ENCODE measurements at regions of chr6 and their contacts with region 1.

Region 1: DNA sequence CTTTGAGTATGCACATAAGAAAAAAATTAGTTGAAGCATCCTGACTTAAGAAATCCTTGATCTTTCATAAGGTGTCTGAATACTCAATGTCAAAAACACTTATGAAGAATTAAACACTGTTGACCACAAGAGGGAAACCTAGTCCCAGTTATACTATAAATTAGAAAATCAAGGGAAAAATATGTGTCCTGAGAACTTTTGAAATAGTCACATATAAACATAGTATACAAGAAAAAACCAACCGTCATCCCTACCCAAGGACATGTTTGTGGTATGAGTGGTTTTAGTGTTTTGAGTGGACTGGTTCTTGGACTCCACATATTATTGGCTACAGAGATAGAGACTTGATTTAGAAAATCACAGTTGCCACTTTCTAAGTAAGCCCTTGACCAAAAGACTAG is 7.6 kb upstream of the HLA-DRA start:
- DNase-seq: no peak
- H3K4me3 ChIP-seq: no peak overlapping the region
- H3K27ac ChIP-seq: no peak overlapping the region
- H3K4me1 ChIP-seq: no peaks in the 10 kb centered on the region
- H3K27me3 ChIP-seq: peaks cover 8% of the 10 kb centered on the region; the same call in 1 of the 2 replicates
- CTCF ChIP-seq: peak; percentile 69

Region 2: GRCh38 chr6:32692019-32692418 is 260.0 kb after region 1 on chr6:
- CTCF ChIA-PET with region 1: interaction called, 4 read pairs
- POLR2A ChIA-PET with region 1: no interaction called
- intact Hi-C with region 1: loop called (anchors 2 kb)
- DNase-seq: peak in 1 of 2 experiments; percentile 18
- H3K4me3 ChIP-seq: no peak overlapping the region
- H3K27ac ChIP-seq: no peak overlapping the region
- H3K4me1 ChIP-seq: no peaks in the 10 kb centered on the region
- H3K27me3 ChIP-seq: no peaks in the 10 kb centered on the region
- CTCF ChIP-seq: no peak

Region 3: DNA sequence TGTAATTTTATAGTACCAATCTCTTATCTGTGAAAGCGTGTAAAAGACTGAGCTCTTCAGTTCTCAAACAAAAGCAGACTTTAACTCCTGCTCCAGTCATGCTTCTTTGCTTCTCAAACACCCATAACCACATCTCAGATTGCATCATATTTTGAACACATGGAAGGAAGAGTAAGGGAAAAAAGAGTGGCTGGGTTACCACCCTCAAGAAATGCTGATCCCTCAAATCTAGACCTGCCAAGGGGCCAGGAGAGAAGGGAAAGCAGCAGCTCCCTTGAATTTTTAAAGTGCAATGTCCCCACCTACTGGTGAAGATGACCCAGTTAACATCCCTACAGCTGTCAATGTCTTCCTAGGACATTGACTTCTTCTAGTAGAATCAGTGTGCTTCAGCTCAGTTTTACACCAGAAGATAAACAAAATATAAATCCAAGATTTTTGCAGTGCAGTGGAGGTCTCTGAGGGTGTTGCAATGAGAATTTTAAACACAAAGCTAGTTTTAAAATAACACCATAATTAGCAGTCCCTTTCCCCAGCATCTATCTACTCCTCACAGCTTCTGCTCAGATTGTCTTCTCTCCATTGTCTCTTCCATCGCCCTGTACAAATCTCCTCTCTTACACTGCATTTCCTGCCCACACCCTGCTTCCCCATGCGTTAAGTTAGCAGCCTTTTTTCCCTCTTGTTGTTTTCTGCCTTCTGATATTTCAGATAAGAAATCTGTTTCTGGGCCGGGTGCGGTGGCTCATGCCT is 353.9 kb after region 1 on chr6:
- CTCF ChIA-PET with region 1: interaction called, 4 read pairs
- POLR2A ChIA-PET with region 1: no interaction called
- intact Hi-C with region 1: loop called (anchors 5 kb)
- DNase-seq: peak in 1 of 2 experiments; percentile 37
- H3K4me3 ChIP-seq: no peak overlapping the region
- H3K27ac ChIP-seq: no peak overlapping the region
- H3K4me1 ChIP-seq: no peaks in the 10 kb centered on the region
- H3K27me3 ChIP-seq: peaks cover 23% of the 10 kb centered on the region
- CTCF ChIP-seq: peak; percentile 72